OCI-LY7 (cell line): ENCODE measurements at regions of chr10 and their contacts with region 1.

Region 1: DNA sequence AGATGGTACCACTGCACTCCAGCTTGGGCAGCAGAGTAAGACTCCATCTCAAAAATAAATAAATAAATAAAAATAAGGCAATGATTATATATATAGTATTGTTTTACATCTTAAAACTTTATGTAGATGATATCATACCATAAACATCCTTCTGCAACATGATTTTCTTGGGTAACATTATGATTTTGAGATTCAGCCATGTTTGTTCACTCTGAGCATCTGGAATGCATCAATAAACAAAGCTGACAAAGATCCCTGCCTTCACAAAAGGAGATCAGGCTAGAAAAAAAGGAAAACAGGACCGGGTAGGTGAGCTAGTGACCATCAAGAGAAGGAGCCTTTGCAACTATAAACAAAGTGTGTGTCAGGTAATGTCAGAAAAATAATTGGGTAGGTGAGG is 31.9 kb upstream of the KAT6B start:
- DNase-seq: no peak
- H3K4me3 ChIP-seq: no peak overlapping the region
- H3K27ac ChIP-seq: no peak overlapping the region
- H3K4me1 ChIP-seq: peaks cover 43% of the 10 kb centered on the region
- CTCF ChIP-seq: no peak

Region 2: DNA sequence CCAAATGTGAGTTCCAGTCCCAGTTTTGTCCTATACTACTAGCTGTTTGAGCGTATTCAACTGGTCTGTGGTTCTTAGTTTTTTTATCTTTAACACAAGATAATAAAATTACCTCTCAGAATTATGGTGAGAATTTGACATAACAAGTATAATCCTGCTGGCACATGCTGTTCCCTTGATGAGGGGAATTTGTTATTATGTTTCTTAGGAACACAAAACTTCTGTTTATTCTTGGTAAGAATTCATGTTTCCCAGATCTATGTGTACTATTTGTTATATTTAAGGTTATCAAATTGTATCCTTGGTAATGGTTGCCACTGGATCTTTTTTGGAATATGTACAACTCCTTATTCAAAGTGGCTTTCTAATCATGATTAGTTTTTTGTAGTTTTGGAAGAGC is 307.9 kb before region 1 on chr10:
- CTCF ChIA-PET with region 1: no interaction called
- POLR2A ChIA-PET with region 1: no interaction called
- intact Hi-C with region 1: no loop called
- DNase-seq: no peak
- H3K4me3 ChIP-seq: no peak overlapping the region
- H3K27ac ChIP-seq: no peak overlapping the region
- H3K4me1 ChIP-seq: no peaks in the 10 kb centered on the region
- CTCF ChIP-seq: no peak

Region 3: DNA sequence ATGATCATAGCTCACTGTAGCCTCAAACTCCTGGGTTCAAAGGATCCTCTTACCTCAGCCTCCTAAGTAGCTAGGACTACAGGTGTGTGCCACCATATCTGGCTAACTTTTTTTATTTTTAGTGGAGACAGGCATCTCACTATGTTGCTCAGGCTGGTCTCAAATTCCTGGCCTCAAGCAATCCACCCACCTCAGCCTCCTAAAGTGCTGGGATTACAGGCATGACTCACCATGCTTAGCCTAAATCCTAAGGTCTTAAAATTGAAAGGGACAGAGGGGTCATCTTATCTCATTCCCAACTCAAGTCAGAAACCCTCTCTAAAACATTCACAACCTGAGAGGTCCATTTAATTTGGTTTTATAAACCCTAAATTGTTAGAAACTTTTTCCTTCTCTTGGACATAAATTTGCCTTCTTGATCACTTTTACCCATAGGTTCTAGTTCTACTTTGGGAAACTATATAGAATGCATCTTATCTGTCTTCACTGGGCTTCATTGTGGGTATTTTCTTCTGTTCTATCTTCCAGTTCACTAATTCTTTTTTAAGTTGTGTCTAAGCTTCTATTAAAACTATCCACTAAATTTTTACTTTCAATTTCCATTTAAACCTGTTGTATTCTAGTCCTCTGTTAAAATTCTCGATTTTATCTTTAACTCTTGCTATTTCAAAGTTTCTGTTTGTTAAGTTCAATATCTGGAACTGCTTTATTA is 151.5 kb before region 1 on chr10:
- CTCF ChIA-PET with region 1: no interaction called
- POLR2A ChIA-PET with region 1: interaction called, 10 read pairs
- intact Hi-C with region 1: no loop called
- DNase-seq: no peak
- H3K4me3 ChIP-seq: no peak overlapping the region
- H3K27ac ChIP-seq: no peak overlapping the region
- H3K4me1 ChIP-seq: peaks cover 10% of the 10 kb centered on the region
- CTCF ChIP-seq: no peak